Left ventricle myocardium inferior (tissue), 1 donor: ENCODE measurements at regions of chr18 and their contacts with region 1.

Region 1: DNA sequence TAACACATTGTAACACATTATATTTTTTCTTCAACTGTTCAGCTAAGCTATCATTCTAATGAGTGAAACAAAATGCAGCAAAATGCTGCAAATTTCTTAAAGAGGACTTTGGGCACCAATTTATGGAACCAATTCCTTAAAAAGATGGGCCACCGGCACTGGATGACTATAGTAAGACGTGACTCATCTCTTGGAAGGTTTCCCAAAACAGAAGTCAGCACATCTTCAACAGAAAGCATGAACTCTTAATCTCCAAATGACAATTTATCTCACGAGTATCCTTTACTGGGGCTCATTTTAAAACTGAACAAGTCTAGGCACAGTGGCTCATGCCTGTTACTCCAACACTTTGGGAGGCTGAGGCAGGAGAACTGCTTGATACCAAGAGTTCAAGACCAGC is 213.4 kb downstream of the CDH20 start:
- DNase-seq: no peak
- H3K4me3 ChIP-seq: no peak overlapping the region
- H3K27ac ChIP-seq: no peak overlapping the region
- H3K4me1 ChIP-seq: peaks cover 22% of the 10 kb centered on the region
- H3K27me3 ChIP-seq: no peaks in the 10 kb centered on the region
- CTCF ChIP-seq: no peak

Region 2: GRCh38 chr18:62131301-62131909 is 584.8 kb after region 1 on chr18:
- intact Hi-C with region 1: loop called (anchors 10 kb)
- DNase-seq: no peak
- H3K4me3 ChIP-seq: no peak overlapping the region
- H3K27ac ChIP-seq: no peak overlapping the region
- H3K4me1 ChIP-seq: no peaks in the 10 kb centered on the region
- H3K27me3 ChIP-seq: no peaks in the 10 kb centered on the region
- CTCF ChIP-seq: peak; percentile 89